ENCODE measurements at regions of chr11 and their contacts with region 1.

Region 1: DNA sequence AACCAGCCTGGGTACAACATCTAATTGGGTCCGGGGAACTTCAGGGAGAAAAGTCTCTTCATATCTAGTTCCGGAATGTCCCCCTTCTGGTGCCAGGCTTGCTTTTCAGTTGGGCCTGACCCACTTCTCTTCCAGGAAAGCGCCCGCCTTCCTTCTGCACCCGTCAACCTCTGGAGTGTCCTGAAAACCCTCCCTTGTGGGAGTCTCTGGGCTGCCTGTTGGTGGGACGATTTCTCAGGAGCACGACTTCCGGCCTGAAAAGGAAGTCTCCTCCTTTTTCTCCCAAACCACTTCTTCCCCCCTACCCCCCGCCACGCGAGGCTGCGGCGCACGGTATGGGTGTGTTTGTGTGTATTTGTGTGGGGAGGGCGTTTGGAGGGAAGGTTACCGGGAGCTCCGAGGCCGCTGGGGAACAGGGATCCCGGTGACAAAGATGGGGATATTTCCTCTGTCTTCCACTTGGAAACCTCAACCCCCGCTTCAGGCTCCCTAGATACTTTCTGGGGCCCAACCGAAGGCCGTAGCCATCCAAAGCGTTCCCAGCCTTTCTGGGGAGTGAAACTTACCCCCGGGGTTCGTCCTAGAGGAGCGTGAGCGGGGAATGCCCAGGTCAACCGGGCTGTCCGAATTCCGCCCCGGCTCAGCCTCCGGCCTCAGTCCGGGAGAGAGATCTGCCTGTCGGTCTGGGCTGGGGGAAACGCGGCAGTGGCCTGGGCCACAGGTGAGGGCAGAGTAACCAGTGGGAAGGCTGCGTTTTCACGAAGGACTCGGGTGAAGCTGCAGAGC is at the start of gene NKAPD1:
- DNase-seq: peak; percentile 77
- CTCF ChIP-seq: no peak

Region 2: GRCh38 chr11:112086422-112087191 is 12.4 kb after region 1 on chr11 and contains the starts of genes SDHD and TIMM8B:
- CTCF ChIA-PET with region 1: interaction called, 10 read pairs
- POLR2A ChIA-PET with region 1: no interaction called
- DNase-seq: peak; percentile 96
- CTCF ChIP-seq: peak; percentile 27